Activated CD4-positive, alpha-beta memory T cell treated with anti-CD3 and anti-CD28 coated beads for 36 hours (primary cell): ENCODE measurements at regions of chr11 and their contacts with region 1.

Region 1: GRCh38 chr11:57359896-57360690 is 20.9 kb downstream of the PRG3 start:
- DNase-seq: no peak
- H3K4me3 Mint-ChIP-seq: no peak overlapping the region
- H3K27ac Mint-ChIP-seq: no peak overlapping the region
- H3K4me1 Mint-ChIP-seq: no peaks in the 10 kb centered on the region
- H3K27me3 Mint-ChIP-seq: peaks cover 11% of the 10 kb centered on the region

Region 2: GRCh38 chr11:57399221-57399620 is 39.1 kb after region 1 on chr11:
- CTCF ChIA-PET with region 1: no interaction called
- POLR2A ChIA-PET with region 1: no interaction called
- intact Hi-C with region 1: loop called (anchors 5 kb)
- DNase-seq: no peak
- H3K4me3 Mint-ChIP-seq: no peak overlapping the region
- H3K27ac Mint-ChIP-seq: no peak overlapping the region
- H3K4me1 Mint-ChIP-seq: peaks cover 3% of the 10 kb centered on the region
- H3K27me3 Mint-ChIP-seq: no peaks in the 10 kb centered on the region